ENCODE measurements at regions of chr11 and their contacts with region 1.

Region 1: DNA sequence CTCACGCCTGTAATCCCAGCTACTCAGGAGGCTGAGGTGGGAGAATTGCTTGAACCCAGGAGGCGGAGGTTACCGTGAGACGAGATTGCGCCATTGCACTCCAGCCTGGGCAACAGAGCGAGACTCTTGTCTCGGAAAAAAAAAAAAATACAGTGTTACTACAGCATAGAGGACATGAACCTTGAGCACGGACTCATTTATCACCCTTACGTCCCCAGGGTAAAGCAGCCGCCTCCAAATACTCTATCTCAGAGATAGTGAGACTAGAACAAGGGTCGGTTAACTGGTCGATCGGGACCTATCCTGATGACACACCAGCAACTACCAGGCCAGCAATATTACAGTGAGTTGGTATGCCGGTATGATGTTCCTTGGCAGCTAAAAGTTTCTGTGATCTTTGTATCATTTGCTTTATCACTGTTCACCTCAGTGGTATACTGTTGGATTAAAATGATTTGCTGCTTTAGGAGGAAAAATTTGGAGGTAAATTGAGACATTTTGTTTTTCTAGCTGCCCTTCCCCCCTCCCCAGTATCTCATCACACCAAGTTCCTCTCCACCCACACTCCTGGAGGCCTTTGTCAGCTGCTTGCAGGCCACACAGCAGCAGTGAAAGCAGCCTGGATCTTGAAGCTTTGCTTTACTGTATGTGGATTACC is 7.0 kb upstream of the SIDT2 start:
- DNase-seq: no peak
- CTCF ChIP-seq: no peak

Region 2: DNA sequence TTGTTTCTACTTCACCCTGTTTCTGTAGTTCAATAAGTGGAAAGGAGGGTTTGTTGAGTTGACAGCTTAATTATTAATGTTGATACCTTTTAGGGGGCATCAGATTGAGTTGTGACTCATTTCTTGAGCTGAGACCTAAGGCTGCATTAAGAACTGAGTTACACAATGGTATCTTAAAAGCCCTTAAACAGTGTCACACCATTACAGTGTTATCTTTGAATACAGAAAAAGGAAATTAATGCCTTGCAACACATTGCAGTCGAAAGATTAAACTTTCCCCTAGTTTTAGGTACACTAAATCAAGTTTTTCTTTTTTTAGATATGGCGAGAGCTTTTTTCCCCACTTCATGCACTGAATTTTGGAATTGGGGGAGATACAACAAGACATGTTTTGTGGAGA is 10.7 kb before region 1 on chr11:
- CTCF ChIA-PET with region 1: interaction called, 10 read pairs
- POLR2A ChIA-PET with region 1: interaction called, 3 read pairs
- DNase-seq: no peak
- CTCF ChIP-seq: no peak

Region 3: GRCh38 chr11:117199061-117199915 is 27.8 kb after region 1 on chr11 and contains the start of gene TAGLN:
- CTCF ChIA-PET with region 1: no interaction called
- POLR2A ChIA-PET with region 1: no interaction called
- DNase-seq: no peak
- CTCF ChIP-seq: no peak

Region 4: DNA sequence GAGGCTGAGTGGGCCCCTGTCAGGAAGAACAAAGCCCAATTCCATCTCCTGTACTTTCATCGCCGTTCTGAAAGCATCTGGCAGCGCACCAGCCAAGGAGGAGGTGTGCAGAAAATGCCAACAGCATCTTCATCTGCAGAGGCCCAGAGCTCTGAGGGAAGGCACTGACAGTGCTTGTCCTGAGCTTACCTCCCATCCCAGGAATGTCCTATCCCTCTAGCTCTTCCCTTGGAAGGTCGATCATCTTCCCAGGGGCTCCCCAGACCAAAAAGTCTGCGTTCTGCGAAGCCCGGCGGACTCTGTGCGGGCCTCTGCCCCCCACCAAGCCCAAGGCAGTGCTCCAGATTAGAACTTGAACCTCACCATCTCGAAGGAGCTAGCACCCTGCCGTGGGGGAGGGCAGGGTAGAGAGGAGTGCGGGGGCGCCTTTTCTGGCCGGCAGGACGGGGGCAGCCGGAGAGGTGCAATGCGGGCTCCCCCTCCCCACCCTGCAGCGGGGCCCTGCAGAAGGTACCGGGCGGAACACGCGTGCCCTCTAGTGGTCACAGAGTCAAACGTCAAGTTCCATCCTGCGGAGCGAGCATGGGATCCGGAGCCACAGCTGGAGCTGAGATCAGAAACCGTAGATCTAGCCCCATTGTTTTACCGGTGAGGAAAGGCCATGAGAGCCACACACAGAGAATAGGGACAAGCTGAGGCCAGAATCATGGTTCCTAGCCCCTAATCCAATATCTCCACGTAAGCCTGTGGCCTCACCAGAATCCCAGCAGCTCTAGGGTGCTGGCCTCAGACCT is 999.9 kb after region 1 on chr11:
- CTCF ChIA-PET with region 1: no interaction called
- POLR2A ChIA-PET with region 1: no interaction called
- DNase-seq: peak; percentile 88
- CTCF ChIP-seq: peak; percentile 93